ENCODE measurements at regions of chr4 and their contacts with region 1.

Region 1: GRCh38 chr4:82201805-82202641 is 171.8 kb downstream of the HNRNPD start:
- DNase-seq: peak; percentile 18
- CTCF ChIP-seq: peak; percentile 81

Region 2: DNA sequence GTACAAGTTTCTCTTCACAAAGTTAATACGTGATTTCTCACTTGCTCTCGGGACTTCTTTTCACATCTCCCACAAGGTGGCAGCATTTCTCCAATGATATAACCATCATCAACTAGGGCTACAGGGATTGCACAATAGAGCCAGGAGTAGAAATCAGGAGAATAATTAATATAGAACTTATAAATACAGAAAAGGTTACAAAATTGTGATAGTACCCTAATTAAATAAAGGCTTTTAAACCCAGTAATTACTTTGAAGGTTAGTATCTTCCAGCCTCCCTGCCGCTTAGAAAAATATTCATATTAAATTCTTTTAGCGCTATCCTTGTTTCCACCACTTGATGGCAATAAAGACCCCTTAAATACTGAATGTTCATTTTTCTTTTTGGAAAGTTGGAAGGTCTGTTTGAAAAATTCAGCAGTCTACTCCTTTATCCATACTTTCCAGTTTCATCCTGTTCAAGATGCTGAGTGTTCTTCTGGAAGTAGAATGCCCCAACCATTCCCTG is 796.1 kb before region 1 on chr4:
- in situ Hi-C with region 1: loop called (anchors 10 kb)
- DNase-seq: peak; percentile 62
- CTCF ChIP-seq: peak; percentile 67

Region 3: GRCh38 chr4:81844717-81845116 is 357.3 kb before region 1 on chr4:
- in situ Hi-C with region 1: loop called (anchors 25 kb)
- DNase-seq: peak; percentile 48
- CTCF ChIP-seq: peak; percentile 86

Region 4: GRCh38 chr4:82268050-82268825 is 66.2 kb after region 1 on chr4:
- in situ Hi-C with region 1: no loop called
- DNase-seq: peak; percentile 40
- CTCF ChIP-seq: peak; percentile 75

Region 5: DNA sequence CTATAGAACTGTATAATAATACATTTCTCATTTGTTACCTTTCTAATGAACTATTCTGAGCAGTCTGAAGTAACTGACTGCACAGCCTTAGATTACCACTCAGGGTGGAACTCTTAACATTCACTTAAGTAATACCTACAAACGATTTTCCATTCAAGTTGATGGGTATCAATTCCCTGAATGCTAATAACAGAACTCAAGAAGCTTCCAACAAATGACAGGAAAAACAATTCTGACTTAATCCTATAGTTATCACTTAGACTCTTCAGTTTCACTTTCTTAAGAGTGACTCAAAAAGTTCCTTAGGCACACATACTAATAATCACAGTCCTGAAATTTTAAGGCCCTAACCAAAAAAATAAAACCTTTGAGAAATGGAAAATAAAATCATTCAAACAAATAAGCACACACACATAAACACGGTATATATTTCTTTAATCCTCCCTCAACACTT is 150.9 kb after region 1 on chr4:
- in situ Hi-C with region 1: no loop called
- DNase-seq: no peak
- CTCF ChIP-seq: no peak

Region 6: GRCh38 chr4:82528868-82529267 is 326.8 kb after region 1 on chr4:
- in situ Hi-C with region 1: no loop called
- DNase-seq: no peak
- CTCF ChIP-seq: no peak